ENCODE measurements at regions of chr4 and their contacts with region 1.

Region 1: GRCh38 chr4:68576272-68577100 is at the start of gene UGT2B17:
- DNase-seq: no peak
- total RNA-seq, gene UGT2B17: not detected

Region 2: GRCh38 chr4:68490826-68491457 is 85.5 kb before region 1 on chr4:
- intact Hi-C with region 1: no loop called
- DNase-seq: no peak

Region 3: GRCh38 chr4:68871809-68872642 is 295.5 kb after region 1 on chr4:
- intact Hi-C with region 1: loop called in 1 of 2 experiments (anchors 5 kb)
- DNase-seq: no peak